Heart right ventricle (tissue), 16 donors: ENCODE measurements at regions of chr6 and their contacts with region 1.

Region 1: DNA sequence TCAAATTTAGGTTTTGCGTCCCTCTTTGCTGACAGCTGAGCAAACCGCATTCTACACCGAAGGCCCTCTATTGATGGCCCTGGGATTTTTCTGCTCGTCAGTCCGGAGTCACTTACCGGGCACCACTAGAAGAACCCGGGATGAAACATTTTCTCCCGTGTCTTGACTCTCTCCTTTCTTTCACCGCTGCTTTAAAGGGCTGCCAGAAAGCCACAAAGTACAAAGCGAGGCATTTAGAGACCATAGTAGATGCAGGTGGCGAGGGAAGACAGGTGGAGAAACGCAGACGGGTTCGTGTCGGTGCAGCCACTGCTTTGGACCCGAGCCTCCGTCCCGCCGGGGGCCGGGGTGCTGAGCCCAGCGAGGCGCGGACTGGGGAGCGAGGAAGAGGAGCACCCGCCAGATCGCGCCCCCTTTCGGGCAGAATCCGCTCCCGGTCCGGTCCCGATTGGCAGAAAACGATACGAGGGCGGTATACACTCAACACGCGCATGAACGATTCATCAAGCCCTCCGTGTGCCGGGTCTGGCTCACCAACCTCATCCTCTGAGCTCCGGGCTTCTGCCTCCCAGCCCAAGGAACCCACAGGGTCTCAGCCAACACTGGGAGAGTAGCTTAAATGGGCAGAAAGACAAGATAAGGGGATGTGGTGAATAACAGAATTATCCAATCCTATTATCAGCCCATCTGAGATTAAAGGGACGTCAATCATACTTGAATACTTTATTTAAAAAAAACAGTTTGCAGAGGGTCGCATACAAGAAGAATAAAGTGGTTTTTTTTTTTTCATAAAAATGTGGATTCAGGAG is 84.9 kb downstream of the TRIM27 start:
- DNase-seq: peak; percentile 74 to 81
- ATAC-seq: peak; percentile 82 to 98 (median 88)
- H3K4me3 ChIP-seq: peak overlapping the region; percentile 42 to 75 (median 66)
- H3K27ac ChIP-seq: peak overlapping the region in 7 of 10 donors; percentile 18 to 57 (median 41)
- H3K4me1 ChIP-seq: peaks cover 0 to 27% (median 18%) of the 10 kb centered on the region in 9 donors
- H3K27me3 ChIP-seq: peaks cover 0 to 74% (median 46%) of the 10 kb centered on the region in 7 donors
- CTCF ChIP-seq: peak in 8 of 9 donors; percentile 9 to 70 (median 54)

Region 2: DNA sequence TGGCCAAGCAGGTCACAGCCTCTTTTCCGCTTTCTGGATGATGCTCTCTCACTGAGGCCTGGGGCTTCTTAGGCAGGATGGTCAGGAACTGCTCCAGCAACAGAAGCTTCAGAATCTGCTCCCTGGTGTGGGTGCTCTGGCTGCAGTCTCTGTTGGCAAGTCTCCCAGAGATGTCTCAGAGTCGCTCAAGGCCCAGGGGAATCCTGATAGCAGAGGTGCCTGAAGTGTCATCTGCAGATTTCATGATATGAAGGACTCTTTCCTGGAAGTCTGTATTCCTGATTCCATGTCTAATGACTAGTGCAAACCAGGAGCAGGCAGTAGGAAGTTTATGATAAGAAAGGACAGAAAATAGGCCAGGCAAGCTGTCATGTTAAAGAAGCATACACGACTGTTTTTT is 523.2 kb before region 1 on chr6:
- intact Hi-C with region 1: no loop called
- DNase-seq: no peak
- ATAC-seq: no peak
- H3K4me3 ChIP-seq: no peak overlapping the region
- H3K27ac ChIP-seq: no peak overlapping the region
- H3K4me1 ChIP-seq: no peaks in the 10 kb centered on the region
- H3K27me3 ChIP-seq: no peaks in the 10 kb centered on the region
- CTCF ChIP-seq: no peak

Region 3: GRCh38 chr6:28683944-28684538 is 154.8 kb before region 1 on chr6:
- intact Hi-C with region 1: loop called in 3 of 10 experiments (anchors 5 to 10 kb)
- DNase-seq: no peak
- ATAC-seq: peak in 1 of 8 donors; percentile 47
- H3K4me3 ChIP-seq: no peak overlapping the region
- H3K27ac ChIP-seq: no peak overlapping the region
- H3K4me1 ChIP-seq: peaks cover 0 to 10% (median 0%) of the 10 kb centered on the region in 9 donors
- H3K27me3 ChIP-seq: peaks cover 14 to 90% (median 78%) of the 10 kb centered on the region in 7 donors
- CTCF ChIP-seq: peak; percentile 14 to 56 (median 42)

Region 4: GRCh38 chr6:28789553-28790083 is 49.2 kb before region 1 on chr6:
- intact Hi-C with region 1: no loop called
- DNase-seq: no peak
- ATAC-seq: no peak
- H3K4me3 ChIP-seq: peak overlapping the region in 3 of 10 donors; percentile 17 to 32 (median 22)
- H3K27ac ChIP-seq: no peak overlapping the region
- H3K4me1 ChIP-seq: peaks cover 0 to 6% (median 0%) of the 10 kb centered on the region in 9 donors
- H3K27me3 ChIP-seq: peaks cover 24 to 100% (median 100%) of the 10 kb centered on the region in 7 donors
- CTCF ChIP-seq: no peak

Region 5: GRCh38 chr6:28863604-28864320 is 24.9 kb after region 1 on chr6:
- intact Hi-C with region 1: loop called in 1 of 10 experiments (anchors 2 kb)
- DNase-seq: peak; percentile 53 to 62
- ATAC-seq: peak; percentile 59 to 92 (median 86)
- H3K4me3 ChIP-seq: peak overlapping the region; percentile 28 to 92 (median 66)
- H3K27ac ChIP-seq: peak overlapping the region in 1 of 10 donors; percentile 39
- H3K4me1 ChIP-seq: peaks cover 2 to 20% (median 10%) of the 10 kb centered on the region in 9 donors
- H3K27me3 ChIP-seq: peaks cover 0 to 17% (median 0%) of the 10 kb centered on the region in 7 donors
- CTCF ChIP-seq: no peak

Region 6: GRCh38 chr6:28940858-28941680 is 102.2 kb after region 1 on chr6:
- intact Hi-C with region 1: loop called in 1 of 10 experiments (anchors 5 kb)
- DNase-seq: peak; percentile 42 to 87
- ATAC-seq: peak; percentile 72 to 95 (median 83)
- H3K4me3 ChIP-seq: peak overlapping the region; percentile 41 to 71 (median 61)
- H3K27ac ChIP-seq: peak overlapping the region in 9 of 10 donors; percentile 35 to 82 (median 67)
- H3K4me1 ChIP-seq: peaks cover 0 to 56% (median 26%) of the 10 kb centered on the region in 9 donors
- H3K27me3 ChIP-seq: no peaks in the 10 kb centered on the region
- CTCF ChIP-seq: no peak

Region 7: GRCh38 chr6:28981833-28982475 is 143.1 kb after region 1 on chr6:
- intact Hi-C with region 1: loop called in 2 of 10 experiments (anchors 1 to 10 kb)
- DNase-seq: peak; percentile 72 to 86
- ATAC-seq: peak; percentile 72 to 90 (median 86)
- H3K4me3 ChIP-seq: peak overlapping the region; percentile 42 to 71 (median 66)
- H3K27ac ChIP-seq: peak overlapping the region; percentile 21 to 76 (median 68)
- H3K4me1 ChIP-seq: peaks cover 0 to 47% (median 6%) of the 10 kb centered on the region in 9 donors
- H3K27me3 ChIP-seq: peaks cover 0 to 18% (median 14%) of the 10 kb centered on the region in 7 donors
- CTCF ChIP-seq: peak in 5 of 9 donors; percentile 15 to 40 (median 23)

Region 8: DNA sequence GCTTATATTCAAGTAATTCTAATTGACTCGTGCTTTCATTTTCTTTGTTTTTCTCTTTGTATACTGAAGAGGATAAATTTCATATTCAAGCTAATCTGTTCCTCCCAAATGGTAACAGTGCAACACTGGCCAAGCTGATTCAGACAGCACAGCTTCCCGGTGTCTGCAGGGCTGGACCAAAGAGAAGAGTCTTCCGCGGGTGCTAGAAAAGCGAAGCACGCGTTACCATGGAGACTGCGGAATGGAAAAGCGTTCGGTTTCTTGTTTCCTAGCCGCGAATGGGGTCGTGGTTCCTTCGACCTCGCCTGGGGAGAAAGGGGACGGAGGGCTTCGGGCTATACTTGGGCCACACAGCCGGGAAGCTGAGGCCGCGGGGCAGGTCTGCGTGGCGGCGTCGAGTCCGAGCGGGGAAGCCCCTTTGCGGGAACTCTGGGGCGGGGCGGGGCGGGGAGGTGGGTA is 172.5 kb after region 1 on chr6:
- intact Hi-C with region 1: loop called in 9 of 10 experiments (anchors 1 to 5 kb)
- DNase-seq: peak in 1 of 2 donors; percentile 38
- ATAC-seq: peak in 5 of 8 donors; percentile 55 to 82 (median 60)
- H3K4me3 ChIP-seq: peak overlapping the region in 9 of 10 donors; percentile 23 to 55 (median 51)
- H3K27ac ChIP-seq: peak overlapping the region in 1 of 10 donors; percentile 30
- H3K4me1 ChIP-seq: peaks cover 0 to 15% (median 7%) of the 10 kb centered on the region in 9 donors
- H3K27me3 ChIP-seq: peaks cover 0 to 93% (median 65%) of the 10 kb centered on the region in 7 donors
- CTCF ChIP-seq: no peak

Region 9: DNA sequence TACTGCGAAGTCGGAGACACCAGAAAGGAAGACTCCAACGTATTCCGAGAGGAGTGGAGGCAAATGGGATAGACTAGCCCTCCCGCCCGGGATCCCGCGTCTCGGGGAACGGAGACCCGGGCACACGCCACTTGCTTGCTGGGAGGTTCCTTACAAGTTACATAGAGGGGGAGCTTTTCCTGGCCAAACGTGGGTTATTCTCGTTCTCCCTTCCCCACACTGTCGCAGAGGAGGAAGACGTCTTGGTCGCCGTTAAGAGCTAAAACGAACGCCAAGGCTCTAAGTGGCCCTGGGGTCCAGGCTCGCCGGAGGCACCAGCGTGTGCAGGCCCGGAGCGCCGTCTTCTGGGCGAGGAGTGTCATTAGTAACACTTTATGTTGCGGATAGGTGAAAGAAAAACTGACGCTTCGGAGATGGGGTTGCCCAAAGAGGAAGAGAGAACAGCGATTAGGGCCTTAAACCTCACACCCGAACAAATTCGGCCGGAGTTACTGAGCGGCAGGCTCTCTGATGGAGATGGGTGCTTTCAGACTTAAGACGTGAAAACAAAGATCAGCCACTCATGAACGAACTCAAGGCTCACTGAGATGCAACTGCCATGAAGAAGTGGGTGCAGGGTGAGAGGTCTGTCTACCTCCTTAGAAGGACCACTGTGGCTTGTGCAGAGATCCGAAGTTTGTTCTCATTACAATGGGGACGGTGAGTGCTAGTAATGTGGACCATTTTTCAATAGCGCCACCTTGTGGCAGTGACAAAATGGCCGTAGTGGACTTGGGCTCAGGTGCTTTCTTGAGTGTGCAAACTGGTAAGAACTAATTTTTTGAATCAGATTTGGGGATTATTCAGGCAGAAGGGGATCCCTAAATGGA is 178.0 kb after region 1 on chr6:
- intact Hi-C with region 1: loop called (anchors 1 to 5 kb)
- DNase-seq: peak; percentile 61 to 80
- ATAC-seq: peak; percentile 82 to 97 (median 92)
- H3K4me3 ChIP-seq: peak overlapping the region; percentile 4 to 62 (median 52)
- H3K27ac ChIP-seq: no peak overlapping the region
- H3K4me1 ChIP-seq: peaks cover 0 to 14% (median 9%) of the 10 kb centered on the region in 9 donors
- H3K27me3 ChIP-seq: peaks cover 0 to 77% (median 57%) of the 10 kb centered on the region in 7 donors
- CTCF ChIP-seq: peak; percentile 52 to 85 (median 81)